ENCODE measurements at regions of chrX and their contacts with region 1.

Region 1: GRCh38 chrX:154013614-154014360 is 5.9 kb downstream of the IRAK1 start:
- DNase-seq: no peak
- H3K4me3 ChIP-seq: no peak overlapping the region
- CTCF ChIP-seq: peak; percentile 75

Region 2: DNA sequence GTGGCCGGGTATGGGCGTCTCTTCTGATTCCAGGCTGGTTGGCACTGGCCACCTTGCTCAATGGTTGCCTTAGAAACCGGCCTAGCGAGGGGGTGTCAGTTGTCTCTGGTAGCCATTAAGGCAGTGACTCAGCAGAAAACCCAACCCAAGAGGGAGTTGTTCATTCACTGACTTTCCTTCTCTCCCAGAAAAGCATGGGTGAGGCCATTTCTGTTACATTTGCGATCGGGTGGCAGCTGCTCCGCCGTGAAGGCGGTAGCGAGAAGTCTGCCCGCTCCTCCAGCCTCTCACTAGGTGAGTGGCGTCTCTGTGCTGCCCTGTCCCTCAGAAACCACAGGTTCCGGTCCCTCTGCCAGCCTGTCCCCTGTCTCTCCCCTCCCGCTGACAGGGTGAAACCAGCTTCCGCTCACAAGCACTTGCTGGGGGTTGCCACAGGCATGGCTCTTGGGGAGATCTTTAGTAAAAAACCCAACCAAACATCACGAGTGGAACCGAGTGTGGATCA is 11.5 kb before region 1 on chrX:
- CTCF ChIA-PET with region 1: interaction called, 16 read pairs
- POLR2A ChIA-PET with region 1: interaction called, 4 read pairs
- DNase-seq: no peak
- H3K4me3 ChIP-seq: no peak overlapping the region
- CTCF ChIP-seq: no peak

Region 3: DNA sequence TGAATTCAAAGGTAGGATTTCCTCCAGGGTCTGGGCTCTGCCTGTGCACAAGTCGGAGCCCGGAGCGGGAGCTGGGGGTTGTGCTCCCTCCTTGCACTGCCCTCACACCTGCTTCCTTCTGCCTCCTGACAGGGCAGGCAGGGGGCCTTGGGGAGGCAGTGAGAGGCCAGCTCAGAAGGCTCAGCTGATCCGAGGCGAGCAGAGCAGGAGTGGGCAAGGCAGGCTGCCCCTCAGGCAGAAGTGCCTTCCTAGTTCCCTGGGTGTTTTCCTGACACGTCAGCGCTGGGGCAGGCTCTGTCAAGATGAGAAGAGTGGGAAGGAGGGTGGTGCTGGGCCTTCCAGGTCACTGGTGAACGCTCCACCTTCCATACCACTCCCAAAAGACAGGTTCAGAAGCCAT is 11.4 kb after region 1 on chrX:
- CTCF ChIA-PET with region 1: interaction called, 18 read pairs
- POLR2A ChIA-PET with region 1: no interaction called
- DNase-seq: no peak
- H3K4me3 ChIP-seq: no peak overlapping the region
- CTCF ChIP-seq: no peak

Region 4: DNA sequence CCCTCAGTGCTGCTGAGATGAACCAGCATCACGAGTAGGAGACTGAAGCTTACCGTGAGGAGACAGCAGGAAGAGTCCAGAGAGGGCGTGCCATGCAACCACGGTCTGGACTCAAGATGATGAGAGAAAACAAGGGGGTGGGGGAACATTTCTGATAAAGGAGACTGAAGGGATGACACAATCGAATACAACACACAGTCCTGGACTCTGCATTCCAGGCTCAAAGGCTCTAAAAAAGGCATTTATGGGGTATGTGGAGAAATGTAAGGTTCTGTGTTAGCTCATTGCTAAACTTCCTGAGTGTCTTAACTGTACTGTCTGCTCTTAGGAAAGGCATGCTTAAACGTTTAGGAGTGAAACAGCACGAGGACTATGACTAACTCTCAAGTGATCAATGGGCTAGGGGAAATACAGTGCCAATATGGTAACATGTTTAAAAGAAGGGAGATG is 26.5 kb after region 1 on chrX:
- CTCF ChIA-PET with region 1: interaction called, 19 read pairs
- POLR2A ChIA-PET with region 1: no interaction called
- DNase-seq: peak; percentile 69
- H3K4me3 ChIP-seq: no peak overlapping the region
- CTCF ChIP-seq: no peak

Region 5: GRCh38 chrX:154051201-154051810 is 37.5 kb after region 1 on chrX:
- CTCF ChIA-PET with region 1: interaction called, 12 read pairs
- POLR2A ChIA-PET with region 1: no interaction called
- DNase-seq: no peak
- H3K4me3 ChIP-seq: no peak overlapping the region
- CTCF ChIP-seq: peak; percentile 57